CD4-positive, alpha-beta T cell (primary cell): ENCODE measurements at regions of chr1 and their contacts with region 1.

Region 1: GRCh38 chr1:165933446-165934178 is 106.2 kb downstream of the UCK2 start:
- DNase-seq: no peak
- ATAC-seq: no peak
- H3K4me3 ChIP-seq: no peak overlapping the region
- H3K4me3 Mint-ChIP-seq: no peak overlapping the region
- H3K27ac ChIP-seq: no peak overlapping the region
- H3K27ac Mint-ChIP-seq: no peak overlapping the region
- H3K4me1 ChIP-seq: no peaks in the 10 kb centered on the region
- H3K4me1 Mint-ChIP-seq: no peaks in the 10 kb centered on the region
- H3K27me3 ChIP-seq: no peaks in the 10 kb centered on the region
- H3K27me3 Mint-ChIP-seq: peaks cover 13% of the 10 kb centered on the region
- CTCF ChIP-seq: no peak

Region 2: DNA sequence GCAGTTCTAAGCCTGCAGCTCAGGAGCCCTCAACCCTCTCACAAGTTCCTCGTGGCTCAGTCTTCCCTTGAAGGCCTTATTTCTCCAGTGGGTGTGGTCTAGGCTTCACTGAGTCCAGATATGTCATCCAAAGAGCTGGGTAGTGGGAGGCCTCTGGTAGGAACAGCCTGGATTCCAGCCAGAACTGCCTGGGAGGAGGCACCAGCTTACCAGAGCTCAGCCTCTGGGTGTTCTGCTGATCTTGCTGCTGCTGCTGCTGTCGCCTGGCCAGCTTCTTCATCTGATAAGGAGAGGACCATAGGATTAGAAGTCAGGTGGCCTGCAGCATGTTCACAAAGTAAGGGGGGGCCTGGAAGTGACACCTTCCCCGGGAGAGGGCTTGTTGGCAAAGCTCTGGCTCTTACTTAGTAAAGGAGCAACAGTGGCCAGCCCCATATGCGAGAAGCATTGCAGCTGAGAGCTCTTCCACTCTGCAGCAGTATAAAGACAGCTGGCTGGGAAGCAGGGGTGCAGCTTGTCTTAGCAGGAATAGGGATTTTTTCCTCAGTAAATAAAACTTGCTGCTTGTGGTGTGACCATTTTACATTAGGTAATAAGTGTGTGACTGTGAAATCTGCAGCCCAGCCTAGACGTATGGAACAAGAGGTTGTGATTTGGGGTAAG is 725.6 kb before region 1 on chr1:
- CTCF ChIA-PET with region 1: no interaction called
- POLR2A ChIA-PET with region 1: no interaction called
- intact Hi-C with region 1: no loop called
- DNase-seq: no peak
- ATAC-seq: no peak
- H3K4me3 ChIP-seq: no peak overlapping the region
- H3K4me3 Mint-ChIP-seq: no peak overlapping the region
- H3K27ac ChIP-seq: no peak overlapping the region
- H3K27ac Mint-ChIP-seq: no peak overlapping the region
- H3K4me1 ChIP-seq: no peaks in the 10 kb centered on the region
- H3K4me1 Mint-ChIP-seq: no peaks in the 10 kb centered on the region
- H3K27me3 ChIP-seq: no peaks in the 10 kb centered on the region
- H3K27me3 Mint-ChIP-seq: peaks cover 10% of the 10 kb centered on the region
- CTCF ChIP-seq: no peak

Region 3: GRCh38 chr1:166153525-166154314 is 220.1 kb after region 1 on chr1:
- CTCF ChIA-PET with region 1: no interaction called
- POLR2A ChIA-PET with region 1: no interaction called
- intact Hi-C with region 1: loop called in 1 of 2 experiments (anchors 10 kb)
- DNase-seq: no peak
- ATAC-seq: no peak
- H3K4me3 ChIP-seq: no peak overlapping the region
- H3K4me3 Mint-ChIP-seq: no peak overlapping the region
- H3K27ac ChIP-seq: no peak overlapping the region
- H3K27ac Mint-ChIP-seq: no peak overlapping the region
- H3K4me1 ChIP-seq: no peaks in the 10 kb centered on the region
- H3K4me1 Mint-ChIP-seq: no peaks in the 10 kb centered on the region
- H3K27me3 ChIP-seq: no peaks in the 10 kb centered on the region
- H3K27me3 Mint-ChIP-seq: peaks cover 6% of the 10 kb centered on the region
- CTCF ChIP-seq: no peak